Sigmoid colon (tissue), 7 donors: ENCODE measurements at regions of chr1 and their contacts with region 1.

Region 1: GRCh38 chr1:12433323-12434053 is 184.5 kb downstream of the DHRS3 start:
- DNase-seq: peak; percentile 79
- H3K4me3 ChIP-seq: no peak overlapping the region
- H3K27ac ChIP-seq: peak overlapping the region; percentile 56 to 81 (median 76)
- H3K4me1 ChIP-seq: peaks cover 0 to 56% (median 42%) of the 10 kb centered on the region in 4 donors
- H3K27me3 ChIP-seq: no peaks in the 10 kb centered on the region
- CTCF ChIP-seq: no peak
- EP300 ChIP-seq: no peak
- POLR2A ChIP-seq: no peak

Region 2: GRCh38 chr1:12448746-12449177 is 15.3 kb after region 1 on chr1:
- intact Hi-C with region 1: loop called (anchors 2 kb)
- DNase-seq: peak; percentile 81
- H3K4me3 ChIP-seq: no peak overlapping the region
- H3K27ac ChIP-seq: peak overlapping the region; percentile 76 to 89 (median 86)
- H3K4me1 ChIP-seq: peaks cover 0 to 85% (median 77%) of the 10 kb centered on the region in 4 donors
- H3K27me3 ChIP-seq: no peaks in the 10 kb centered on the region
- CTCF ChIP-seq: no peak
- EP300 ChIP-seq: no peak
- POLR2A ChIP-seq: no peak

Region 3: GRCh38 chr1:12460121-12460520 is 26.6 kb after region 1 on chr1:
- intact Hi-C with region 1: no loop called
- DNase-seq: no peak
- H3K4me3 ChIP-seq: no peak overlapping the region
- H3K27ac ChIP-seq: peak overlapping the region; percentile 73 to 89 (median 86)
- H3K4me1 ChIP-seq: peaks cover 0 to 97% (median 88%) of the 10 kb centered on the region in 4 donors
- H3K27me3 ChIP-seq: no peaks in the 10 kb centered on the region
- CTCF ChIP-seq: no peak
- EP300 ChIP-seq: no peak
- POLR2A ChIP-seq: no peak

Region 4: GRCh38 chr1:12709091-12709491 is 275.6 kb after region 1 on chr1:
- intact Hi-C with region 1: no loop called
- DNase-seq: no peak
- H3K4me3 ChIP-seq: no peak overlapping the region
- H3K27ac ChIP-seq: no peak overlapping the region
- H3K4me1 ChIP-seq: no peaks in the 10 kb centered on the region
- H3K27me3 ChIP-seq: no peaks in the 10 kb centered on the region
- CTCF ChIP-seq: no peak
- EP300 ChIP-seq: no peak
- POLR2A ChIP-seq: no peak